Left colon (tissue), 2 donors: ENCODE measurements at regions of chr2 and their contacts with region 1.

Region 1: GRCh38 chr2:7377916-7378569 is 460.8 kb downstream of the RNF144A start:
- DNase-seq: no peak
- ATAC-seq: no peak

Region 2: DNA sequence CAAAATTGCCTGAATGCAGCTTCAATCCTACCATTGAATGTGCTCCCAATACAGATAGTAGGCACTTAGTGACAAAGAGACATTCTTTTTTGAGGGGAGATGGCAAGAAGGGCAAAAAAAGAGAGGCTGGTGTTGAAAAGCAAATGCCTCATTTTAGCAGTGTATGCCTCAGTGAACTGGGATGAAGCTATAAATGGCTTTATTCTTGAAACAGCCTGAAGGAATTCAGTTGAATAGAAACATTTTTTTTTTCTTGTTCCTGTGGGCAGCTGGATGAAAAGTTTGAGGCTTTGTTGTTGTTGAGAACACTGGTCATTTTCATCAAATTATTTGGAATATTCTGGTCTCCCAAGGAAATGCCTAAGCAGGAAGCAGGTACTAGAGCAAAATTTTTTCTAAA is 231.9 kb before region 1 on chr2:
- intact Hi-C with region 1: no loop called
- DNase-seq: no peak
- ATAC-seq: no peak

Region 3: GRCh38 chr2:7203055-7203467 is 175.0 kb before region 1 on chr2:
- intact Hi-C with region 1: loop called in 1 of 2 experiments (anchors 10 kb)
- DNase-seq: peak in 1 of 2 donors; percentile 23
- ATAC-seq: peak; percentile 55

Region 4: GRCh38 chr2:7281231-7282201 is 96.5 kb before region 1 on chr2:
- intact Hi-C with region 1: no loop called
- DNase-seq: no peak
- ATAC-seq: no peak